ENCODE measurements at regions of chr17 and their contacts with region 1.

Region 1: DNA sequence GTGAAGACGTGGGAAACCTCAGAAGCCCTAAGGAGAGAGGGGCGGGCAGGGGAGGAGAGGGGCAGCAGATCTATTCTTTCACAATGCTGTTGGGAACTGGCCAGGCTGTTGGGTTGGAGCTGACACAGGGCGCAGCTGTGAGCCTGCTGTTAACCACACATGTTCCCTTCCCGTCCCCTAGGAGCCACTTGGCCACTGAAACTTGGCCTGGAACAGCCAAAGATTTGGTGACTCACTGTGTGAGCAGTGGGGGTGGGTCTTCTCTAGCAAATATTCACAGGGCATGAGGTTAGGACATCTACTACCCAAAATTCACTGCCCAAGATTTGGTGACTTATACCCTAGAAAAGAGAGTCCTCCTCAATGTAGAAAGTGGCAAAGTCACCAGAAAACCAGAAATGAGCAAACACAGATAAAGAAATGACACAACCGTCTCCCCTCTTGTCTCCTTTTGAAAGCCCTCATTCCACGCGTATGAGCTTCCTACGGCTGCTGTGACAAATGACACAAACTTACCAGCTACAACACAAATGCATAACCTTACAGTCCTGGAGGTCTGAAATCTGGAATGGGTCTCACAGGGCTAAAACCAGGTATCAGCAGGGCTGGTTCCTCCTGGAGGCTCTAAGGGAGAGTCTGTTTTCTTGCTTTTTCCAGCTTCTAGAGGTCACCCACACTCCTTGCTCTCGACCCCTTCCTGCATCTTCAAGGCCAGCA is 6.3 kb downstream of the TBC1D16 start:
- DNase-seq: peak in 1 of 2 donors; percentile 96
- H3K4me3 ChIP-seq: no peak overlapping the region
- H3K27ac ChIP-seq: peak overlapping the region; percentile 70
- H3K4me1 ChIP-seq: peaks cover 71% of the 10 kb centered on the region
- H3K27me3 ChIP-seq: no peaks in the 10 kb centered on the region
- CTCF ChIP-seq: no peak
- POLR2A ChIP-seq: no peak

Region 2: GRCh38 chr17:79997011-79997660 is 32.3 kb before region 1 on chr17:
- intact Hi-C with region 1: no loop called
- DNase-seq: no peak
- H3K4me3 ChIP-seq: no peak overlapping the region
- H3K27ac ChIP-seq: no peak overlapping the region
- H3K4me1 ChIP-seq: peaks cover 23% of the 10 kb centered on the region
- H3K27me3 ChIP-seq: no peaks in the 10 kb centered on the region
- CTCF ChIP-seq: no peak
- POLR2A ChIP-seq: no peak

Region 3: DNA sequence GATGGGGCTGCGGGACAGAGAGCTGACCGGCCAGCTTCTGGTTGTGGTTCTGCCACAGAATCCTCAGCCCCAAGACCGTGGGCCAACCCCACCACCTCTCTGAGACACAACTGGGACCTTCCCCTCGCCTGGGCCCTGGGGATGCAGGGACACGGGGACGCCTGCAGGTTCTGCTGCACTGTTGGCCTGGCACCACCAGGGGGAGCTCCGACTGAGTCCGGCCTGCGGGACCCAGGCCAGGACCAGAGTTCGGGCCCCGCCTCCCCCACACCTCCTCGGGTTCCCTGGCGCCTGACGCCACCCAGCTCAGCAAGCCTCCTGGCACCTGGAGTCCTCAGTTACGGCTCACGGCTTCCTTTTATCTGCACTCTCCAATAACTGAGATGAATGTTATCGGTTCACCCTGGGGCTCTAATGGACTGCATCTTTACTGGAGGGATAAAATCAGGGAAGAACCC is 21.0 kb before region 1 on chr17:
- intact Hi-C with region 1: loop called (anchors 2 kb)
- DNase-seq: no peak
- H3K4me3 ChIP-seq: no peak overlapping the region
- H3K27ac ChIP-seq: no peak overlapping the region
- H3K4me1 ChIP-seq: peaks cover 11% of the 10 kb centered on the region
- H3K27me3 ChIP-seq: no peaks in the 10 kb centered on the region
- CTCF ChIP-seq: peak; percentile 76 to 94 (median 83)
- POLR2A ChIP-seq: no peak

Region 4: DNA sequence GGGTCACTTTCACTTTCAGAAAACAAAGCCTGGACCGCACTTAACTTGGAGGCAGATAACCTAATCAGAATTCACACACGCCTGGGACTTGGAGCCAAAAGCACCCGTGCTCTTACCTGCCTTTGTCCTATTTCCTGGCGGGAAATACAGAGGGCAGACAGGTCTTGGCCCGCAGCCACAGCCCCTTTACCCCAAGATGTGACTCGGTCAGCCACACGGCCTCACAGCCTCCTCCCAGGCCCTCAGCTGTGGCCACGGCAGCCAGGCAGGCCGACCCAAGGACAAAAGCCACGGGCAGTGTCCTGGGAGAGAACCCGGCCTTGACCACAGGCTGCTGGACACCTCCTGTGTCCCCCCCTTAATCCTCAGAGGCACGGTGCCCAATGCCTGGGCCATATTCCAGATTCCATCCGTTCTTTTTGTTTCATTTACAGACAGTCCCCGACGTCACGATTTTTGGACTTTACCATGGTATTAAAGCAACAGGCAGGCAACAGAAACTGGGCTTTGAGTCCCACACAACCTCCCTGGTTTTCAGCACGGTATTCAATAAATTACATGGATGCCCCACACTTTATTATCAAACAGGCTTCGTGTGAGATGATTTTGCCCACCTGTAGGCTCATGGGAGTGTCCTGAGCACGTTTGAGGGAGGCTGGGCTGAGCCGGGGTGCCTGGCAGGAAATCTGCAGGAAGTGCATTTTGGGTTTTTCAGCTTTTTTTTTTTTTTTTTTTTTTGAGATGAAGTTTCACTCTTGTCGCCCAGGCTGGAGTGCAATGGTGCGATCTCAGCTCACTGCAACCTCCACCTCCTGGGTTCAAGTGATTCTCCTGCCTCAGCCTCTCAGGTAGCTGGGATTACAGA is 41.9 kb after region 1 on chr17:
- intact Hi-C with region 1: loop called (anchors 5 kb)
- DNase-seq: no peak
- H3K4me3 ChIP-seq: peak overlapping the region; percentile 38 to 43
- H3K27ac ChIP-seq: peak overlapping the region; percentile 81
- H3K4me1 ChIP-seq: peaks cover 40% of the 10 kb centered on the region
- H3K27me3 ChIP-seq: no peaks in the 10 kb centered on the region
- CTCF ChIP-seq: no peak
- POLR2A ChIP-seq: no peak